Naive thymus-derived CD4-positive, alpha-beta T cell (primary cell): ENCODE measurements at regions of chr1 and their contacts with region 1.

Region 1: GRCh38 chr1:156500797-156501499 is 373 bp upstream of the MEF2D start:
- DNase-seq: peak; percentile 91 to 97 (median 93)
- ATAC-seq: peak; percentile 83
- H3K4me3 ChIP-seq: peak overlapping the region; percentile 81
- H3K4me3 Mint-ChIP-seq: peak overlapping the region; percentile 88 to 97 (median 92)
- H3K27ac ChIP-seq: peak overlapping the region; percentile 99
- H3K27ac Mint-ChIP-seq: peak overlapping the region; percentile 93 to 100 (median 99)
- H3K4me1 ChIP-seq: peaks cover 70 to 71% of the 10 kb centered on the region in 2 donors
- H3K4me1 Mint-ChIP-seq: peaks cover 55 to 75% (median 71%) of the 10 kb centered on the region in 7 donors
- H3K27me3 ChIP-seq: no peaks in the 10 kb centered on the region
- H3K27me3 Mint-ChIP-seq: no peaks in the 10 kb centered on the region

Region 2: DNA sequence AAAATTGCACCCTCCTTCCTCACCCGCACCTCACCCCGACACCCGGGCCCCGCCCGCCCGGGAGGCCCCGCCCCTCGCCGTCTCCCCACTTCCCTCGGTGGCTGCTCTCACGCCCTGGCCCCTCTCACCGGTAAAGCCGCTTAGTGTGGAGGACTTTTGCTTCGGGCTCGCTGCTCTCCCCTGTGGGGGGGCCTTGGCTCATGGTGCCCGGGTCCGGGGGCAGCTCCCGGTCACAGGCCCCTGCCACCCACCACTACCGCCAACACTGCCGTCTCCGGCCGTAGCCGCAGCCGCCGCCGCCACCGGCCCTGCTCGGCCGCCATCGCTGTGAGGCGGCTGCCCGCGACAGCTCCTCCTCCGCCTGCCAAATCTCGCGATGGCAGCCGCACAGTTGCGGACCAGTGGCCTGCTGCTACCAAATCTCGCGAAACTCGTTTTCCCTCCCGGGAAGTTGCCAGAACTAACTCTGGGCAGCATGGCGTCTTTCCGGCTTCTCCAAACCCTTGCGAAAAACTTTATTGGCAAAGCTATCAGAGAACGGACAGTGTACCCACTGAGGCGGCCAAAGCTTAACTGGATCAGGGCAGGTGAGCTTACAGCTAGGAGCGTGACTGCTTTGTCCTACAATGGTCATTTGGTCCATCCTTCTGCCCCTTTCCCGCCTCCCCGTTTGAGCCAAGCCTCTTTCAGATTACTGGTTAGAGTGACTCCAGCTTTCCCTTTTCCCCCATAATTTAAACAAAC is 218.3 kb before region 1 on chr1 and contains the start of gene SMG5:
- CTCF ChIA-PET with region 1: no interaction called
- POLR2A ChIA-PET with region 1: interaction called, 7 read pairs
- intact Hi-C with region 1: loop called in 1 of 2 experiments (anchors 2 kb)
- DNase-seq: peak; percentile 89 to 98 (median 96)
- ATAC-seq: peak; percentile 95
- H3K4me3 ChIP-seq: peak within 1 kb of the TSS; percentile 93
- H3K4me3 Mint-ChIP-seq: peak within 1 kb of the TSS; percentile 85 to 99 (median 94)
- H3K27ac ChIP-seq: peak within 1 kb of the TSS; percentile 89
- H3K27ac Mint-ChIP-seq: peak within 1 kb of the TSS; percentile 89 to 98 (median 95)
- H3K4me1 ChIP-seq: peaks cover 15 to 22% of the 10 kb centered on the region in 2 donors
- H3K4me1 Mint-ChIP-seq: peaks cover 29 to 51% (median 39%) of the 10 kb centered on the region in 7 donors
- H3K27me3 ChIP-seq: no peaks in the 10 kb centered on the region
- H3K27me3 Mint-ChIP-seq: peaks cover 0 to 3% (median 0%) of the 10 kb centered on the region in 5 donors
- total RNA-seq, gene SMG5: 65.7 to 74.0 (median 69.4) TPM

Region 3: GRCh38 chr1:156480411-156481192 is 20.3 kb before region 1 on chr1:
- CTCF ChIA-PET with region 1: interaction called, 39 read pairs
- POLR2A ChIA-PET with region 1: interaction called, 256 read pairs
- intact Hi-C with region 1: loop called (anchors 1 kb)
- DNase-seq: peak; percentile 63 to 88 (median 79)
- ATAC-seq: peak; percentile 87
- H3K4me3 ChIP-seq: no peak overlapping the region
- H3K4me3 Mint-ChIP-seq: peak overlapping the region in 6 of 10 donors; percentile 23 to 51 (median 43)
- H3K27ac ChIP-seq: peak overlapping the region; percentile 46
- H3K27ac Mint-ChIP-seq: peak overlapping the region; percentile 74 to 99 (median 89)
- H3K4me1 ChIP-seq: peaks cover 12 to 25% of the 10 kb centered on the region in 2 donors
- H3K4me1 Mint-ChIP-seq: peaks cover 42 to 67% (median 54%) of the 10 kb centered on the region in 7 donors
- H3K27me3 ChIP-seq: no peaks in the 10 kb centered on the region
- H3K27me3 Mint-ChIP-seq: no peaks in the 10 kb centered on the region

Region 4: GRCh38 chr1:156583821-156584622 is 83.1 kb after region 1 on chr1:
- CTCF ChIA-PET with region 1: interaction called, 10 read pairs
- POLR2A ChIA-PET with region 1: interaction called, 32 read pairs
- intact Hi-C with region 1: loop called in 1 of 2 experiments (anchors 1 kb)
- DNase-seq: peak in 8 of 9 donors; percentile 49 to 76 (median 69)
- ATAC-seq: peak; percentile 81
- H3K4me3 ChIP-seq: no peak overlapping the region
- H3K4me3 Mint-ChIP-seq: peak overlapping the region in 8 of 10 donors; percentile 9 to 77 (median 54)
- H3K27ac ChIP-seq: peak overlapping the region; percentile 3
- H3K27ac Mint-ChIP-seq: peak overlapping the region in 8 of 9 donors; percentile 26 to 88 (median 72)
- H3K4me1 ChIP-seq: peaks cover 15 to 25% of the 10 kb centered on the region in 2 donors
- H3K4me1 Mint-ChIP-seq: peaks cover 6 to 40% (median 29%) of the 10 kb centered on the region in 7 donors
- H3K27me3 ChIP-seq: no peaks in the 10 kb centered on the region
- H3K27me3 Mint-ChIP-seq: no peaks in the 10 kb centered on the region

Region 5: DNA sequence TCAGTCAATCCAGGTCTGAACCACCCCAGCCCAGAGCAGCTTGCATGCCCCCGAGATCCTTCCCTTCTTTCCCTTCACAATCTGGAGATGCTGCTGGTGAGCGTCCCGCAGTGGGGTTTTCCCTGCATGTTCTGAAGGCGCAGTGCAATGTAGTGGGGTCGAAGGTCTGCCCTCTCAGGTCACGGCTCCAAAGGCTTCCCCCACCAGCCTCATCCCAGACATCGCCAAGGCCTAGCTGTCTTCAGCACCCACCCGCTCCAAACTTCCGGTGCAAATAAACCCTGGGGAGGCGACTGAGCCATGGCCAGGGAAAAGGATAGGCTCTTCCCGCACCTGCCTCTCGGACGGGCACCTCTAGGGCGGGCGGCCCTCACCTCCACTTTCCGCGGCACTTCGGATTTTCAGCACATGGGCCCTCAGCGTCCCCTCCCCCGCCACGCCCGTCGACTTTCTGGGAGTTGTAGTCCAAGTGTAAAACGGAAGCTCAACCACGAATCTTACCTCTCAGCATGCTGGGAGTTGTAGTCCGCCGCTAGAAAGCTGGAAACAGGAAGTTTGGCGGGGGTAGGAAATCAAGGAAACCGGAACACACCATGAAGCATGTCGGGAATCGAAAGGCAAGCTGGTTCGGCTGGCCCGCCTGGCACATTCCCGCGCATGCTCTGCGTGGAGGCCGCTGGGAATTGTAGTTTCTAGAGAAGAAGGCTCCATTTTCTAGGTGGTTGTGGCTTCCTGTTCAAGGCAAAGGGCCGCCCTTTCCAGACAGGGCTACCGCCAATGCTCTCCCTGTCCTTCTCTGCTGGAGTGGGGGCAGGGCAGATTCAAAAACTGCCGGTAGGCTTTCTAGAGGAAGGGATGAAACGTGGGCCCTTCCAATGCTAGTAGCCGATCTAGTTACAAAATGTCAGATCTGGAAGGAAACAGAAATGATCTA is 240.0 kb after region 1 on chr1 and contains the start of gene MRPL24:
- CTCF ChIA-PET with region 1: no interaction called
- POLR2A ChIA-PET with region 1: interaction called, 3 read pairs
- intact Hi-C with region 1: loop called in 1 of 2 experiments (anchors 1 kb)
- DNase-seq: peak; percentile 84 to 99 (median 98)
- ATAC-seq: peak; percentile 95
- H3K4me3 ChIP-seq: peak within 1 kb of the TSS; percentile 79
- H3K4me3 Mint-ChIP-seq: peak within 1 kb of the TSS; percentile 94 to 99 (median 98)
- H3K27ac ChIP-seq: peak within 1 kb of the TSS; percentile 90
- H3K27ac Mint-ChIP-seq: peak within 1 kb of the TSS; percentile 86 to 99 (median 98)
- H3K4me1 ChIP-seq: peaks cover 17 to 20% of the 10 kb centered on the region in 2 donors
- H3K4me1 Mint-ChIP-seq: peaks cover 23 to 50% (median 40%) of the 10 kb centered on the region in 7 donors
- H3K27me3 ChIP-seq: no peaks in the 10 kb centered on the region
- H3K27me3 Mint-ChIP-seq: no peaks in the 10 kb centered on the region
- total RNA-seq, gene MRPL24: 19.1 to 68.9 (median 47.2) TPM

Region 6: GRCh38 chr1:156813750-156814570 is 313.0 kb after region 1 on chr1:
- CTCF ChIA-PET with region 1: interaction called, 3 read pairs
- POLR2A ChIA-PET with region 1: no interaction called
- intact Hi-C with region 1: loop called (anchors 1 to 2 kb)
- DNase-seq: peak; percentile 54 to 79 (median 70)
- ATAC-seq: peak; percentile 45
- H3K4me3 ChIP-seq: peak overlapping the region; percentile 83
- H3K4me3 Mint-ChIP-seq: peak overlapping the region; percentile 82 to 97 (median 84)
- H3K27ac ChIP-seq: peak overlapping the region; percentile 98
- H3K27ac Mint-ChIP-seq: peak overlapping the region; percentile 90 to 100 (median 99)
- H3K4me1 ChIP-seq: peaks cover 33 to 59% of the 10 kb centered on the region in 2 donors
- H3K4me1 Mint-ChIP-seq: peaks cover 45 to 76% (median 60%) of the 10 kb centered on the region in 7 donors
- H3K27me3 ChIP-seq: no peaks in the 10 kb centered on the region
- H3K27me3 Mint-ChIP-seq: no peaks in the 10 kb centered on the region

Region 7: DNA sequence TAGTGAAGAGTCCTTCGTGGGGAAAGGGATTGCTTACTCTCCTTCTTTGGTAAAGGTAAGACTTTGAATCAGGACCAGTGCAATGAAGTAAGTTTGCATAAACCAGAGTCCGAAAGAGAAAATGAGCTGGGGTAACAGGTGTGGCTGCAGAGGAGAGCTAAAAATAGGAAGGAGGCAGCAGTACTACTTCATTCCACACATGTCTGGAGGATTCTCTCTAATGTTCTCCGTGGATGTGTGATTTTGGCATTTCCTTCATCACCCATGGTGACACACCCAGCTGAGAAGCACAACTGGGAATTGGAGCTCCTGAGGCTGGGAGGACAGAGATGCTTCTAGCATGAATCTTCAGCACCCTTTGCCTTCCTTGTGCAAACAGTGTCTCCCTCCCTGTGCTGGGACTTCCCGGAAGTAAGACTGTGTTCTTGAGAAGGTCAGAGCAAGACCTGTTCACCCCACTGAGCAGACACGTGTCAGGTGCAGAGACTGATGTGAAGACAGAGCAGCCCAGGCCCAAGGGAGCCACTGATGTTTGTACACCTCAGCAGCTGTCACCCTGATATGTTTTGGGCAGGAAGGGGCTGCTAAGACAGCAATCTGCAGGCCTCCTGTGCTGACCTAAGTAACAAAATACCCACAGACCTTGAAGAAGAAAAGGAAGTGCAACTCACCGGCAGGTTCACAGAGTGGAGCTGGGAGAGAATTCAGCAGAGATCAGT is 1305.6 kb after region 1 on chr1:
- CTCF ChIA-PET with region 1: no interaction called
- POLR2A ChIA-PET with region 1: no interaction called
- intact Hi-C with region 1: no loop called
- DNase-seq: no peak
- ATAC-seq: peak; percentile 54
- H3K4me3 ChIP-seq: no peak overlapping the region
- H3K4me3 Mint-ChIP-seq: no peak overlapping the region
- H3K27ac ChIP-seq: no peak overlapping the region
- H3K27ac Mint-ChIP-seq: no peak overlapping the region
- H3K4me1 ChIP-seq: no peaks in the 10 kb centered on the region
- H3K4me1 Mint-ChIP-seq: peaks cover 0 to 2% (median 0%) of the 10 kb centered on the region in 7 donors
- H3K27me3 ChIP-seq: no peaks in the 10 kb centered on the region
- H3K27me3 Mint-ChIP-seq: peaks cover 7 to 39% (median 15%) of the 10 kb centered on the region in 5 donors